ENCODE measurements at regions of chr6 and their contacts with region 1.

Region 1: DNA sequence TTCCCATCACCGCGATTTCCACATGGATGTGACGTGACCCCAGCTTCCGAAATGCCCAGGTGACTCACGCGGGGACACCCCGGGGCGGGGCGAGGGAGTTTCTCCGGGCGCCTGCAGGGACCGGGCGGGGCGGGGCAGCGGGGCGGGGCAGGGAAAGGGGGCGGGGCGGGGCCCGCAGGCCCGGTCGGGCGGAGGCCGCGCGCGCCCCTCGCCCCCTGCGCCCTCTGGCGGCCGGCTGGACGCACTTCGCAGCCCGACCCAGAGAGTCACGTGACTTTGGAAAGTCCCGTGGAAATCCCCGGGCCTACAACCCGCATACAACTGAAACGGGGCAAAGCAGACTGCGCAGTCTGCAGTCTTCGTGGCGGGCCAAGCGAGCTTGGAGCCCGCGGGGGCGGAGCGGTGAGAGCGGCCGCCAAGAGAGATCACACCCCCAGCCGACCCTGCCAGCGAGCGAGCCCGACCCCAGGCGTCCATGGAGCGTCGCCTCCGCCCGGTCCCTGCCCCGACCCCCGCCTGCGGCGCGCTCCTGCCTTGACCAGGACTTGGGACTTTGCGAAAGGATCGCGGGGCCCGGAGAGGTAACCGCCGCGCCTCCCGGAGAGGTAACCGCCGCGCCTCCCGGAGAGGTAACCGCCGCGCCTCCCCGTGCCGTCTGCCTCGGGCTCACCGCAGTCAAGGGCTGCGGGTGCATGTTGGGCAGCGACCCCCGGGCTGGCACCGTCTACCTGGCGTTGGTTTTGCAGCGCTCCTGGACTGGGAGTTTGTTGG is at the start of gene TNFAIP3:
- DNase-seq: peak; percentile 91
- H3K4me3 ChIP-seq: peak within 1 kb of the TSS; percentile 65 to 87
- H3K27ac ChIP-seq: peak within 1 kb of the TSS; percentile 79 to 85
- H3K4me1 ChIP-seq: peaks cover 4% of the 10 kb centered on the region
- H3K27me3 ChIP-seq: no peaks in the 10 kb centered on the region
- CTCF ChIP-seq: peak; percentile 82 to 96 (median 94)
- POLR2A ChIP-seq: peak; percentile 86
- total RNA-seq, gene TNFAIP3: 13.0 to 19.9 TPM

Region 2: DNA sequence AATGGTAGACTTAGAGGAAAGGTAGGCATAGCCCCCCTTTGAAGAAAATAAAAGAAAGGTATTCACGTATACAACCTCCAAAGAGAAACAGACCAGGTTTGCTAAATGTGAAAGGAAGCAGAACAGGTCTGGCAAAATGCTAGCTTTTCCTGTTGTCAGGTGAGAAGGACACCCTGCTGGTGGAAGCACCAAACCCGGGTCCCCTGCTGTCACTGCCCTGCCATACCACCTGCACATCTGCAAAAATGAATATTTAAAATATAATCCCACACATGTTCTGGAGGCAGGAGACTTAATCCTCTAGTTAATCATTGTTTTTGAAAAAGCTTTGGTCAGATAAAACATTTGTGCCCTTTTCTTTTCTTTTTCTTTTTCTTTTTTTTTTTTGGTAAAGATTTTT is 324.0 kb before region 1 on chr6:
- intact Hi-C with region 1: no loop called
- DNase-seq: no peak
- H3K4me3 ChIP-seq: no peak overlapping the region
- H3K27ac ChIP-seq: no peak overlapping the region
- H3K4me1 ChIP-seq: no peaks in the 10 kb centered on the region
- H3K27me3 ChIP-seq: no peaks in the 10 kb centered on the region
- CTCF ChIP-seq: no peak
- POLR2A ChIP-seq: no peak

Region 3: DNA sequence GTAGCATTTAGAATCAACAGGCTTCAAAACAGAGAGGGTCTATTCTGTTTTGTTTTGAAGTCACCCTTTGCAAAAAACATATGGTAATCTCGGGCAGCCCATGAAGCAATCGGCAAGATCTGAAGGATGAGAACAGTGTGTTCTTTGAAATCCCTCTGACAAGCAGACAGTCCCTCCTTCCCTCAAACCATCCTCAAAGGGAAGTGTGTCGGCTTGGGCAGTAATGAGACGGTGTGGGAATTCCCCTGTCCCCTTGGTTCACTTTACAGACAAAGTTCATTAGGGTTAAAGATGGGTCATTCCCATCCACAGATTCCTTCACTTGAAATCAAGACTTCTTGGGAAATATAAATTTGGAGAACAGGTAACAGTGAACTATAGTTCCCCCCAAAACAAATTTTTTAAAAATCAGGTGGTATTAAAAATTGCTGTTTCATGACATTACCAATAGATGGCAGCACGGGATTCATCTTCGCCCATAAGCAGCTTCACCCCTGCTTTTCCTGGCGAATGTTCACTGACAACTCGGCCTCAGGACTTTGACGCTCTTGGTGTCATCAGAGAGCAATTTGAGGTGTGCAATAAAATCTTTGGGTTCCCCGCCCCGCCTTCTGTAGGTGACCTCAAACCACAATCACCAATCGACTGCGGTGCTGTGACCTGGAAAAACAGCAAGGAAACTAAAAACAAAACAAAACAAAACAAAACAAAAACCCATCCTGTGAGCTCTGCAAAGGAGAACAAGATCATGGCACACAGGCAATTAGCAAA is 159.3 kb before region 1 on chr6:
- intact Hi-C with region 1: loop called (anchors 2 kb)
- DNase-seq: peak; percentile 61
- H3K4me3 ChIP-seq: no peak overlapping the region
- H3K27ac ChIP-seq: peak overlapping the region in 1 of 2 donors; percentile 18
- H3K4me1 ChIP-seq: no peaks in the 10 kb centered on the region
- H3K27me3 ChIP-seq: no peaks in the 10 kb centered on the region
- CTCF ChIP-seq: peak; percentile 67 to 85 (median 80)
- POLR2A ChIP-seq: no peak

Region 4: GRCh38 chr6:137799950-137800568 is 67.0 kb before region 1 on chr6:
- intact Hi-C with region 1: loop called (anchors 5 kb)
- DNase-seq: peak; percentile 57
- H3K4me3 ChIP-seq: no peak overlapping the region
- H3K27ac ChIP-seq: no peak overlapping the region
- H3K4me1 ChIP-seq: peaks cover 2% of the 10 kb centered on the region
- H3K27me3 ChIP-seq: no peaks in the 10 kb centered on the region
- CTCF ChIP-seq: peak in 3 of 4 experiments; percentile 36 to 54 (median 49)
- POLR2A ChIP-seq: no peak

Region 5: DNA sequence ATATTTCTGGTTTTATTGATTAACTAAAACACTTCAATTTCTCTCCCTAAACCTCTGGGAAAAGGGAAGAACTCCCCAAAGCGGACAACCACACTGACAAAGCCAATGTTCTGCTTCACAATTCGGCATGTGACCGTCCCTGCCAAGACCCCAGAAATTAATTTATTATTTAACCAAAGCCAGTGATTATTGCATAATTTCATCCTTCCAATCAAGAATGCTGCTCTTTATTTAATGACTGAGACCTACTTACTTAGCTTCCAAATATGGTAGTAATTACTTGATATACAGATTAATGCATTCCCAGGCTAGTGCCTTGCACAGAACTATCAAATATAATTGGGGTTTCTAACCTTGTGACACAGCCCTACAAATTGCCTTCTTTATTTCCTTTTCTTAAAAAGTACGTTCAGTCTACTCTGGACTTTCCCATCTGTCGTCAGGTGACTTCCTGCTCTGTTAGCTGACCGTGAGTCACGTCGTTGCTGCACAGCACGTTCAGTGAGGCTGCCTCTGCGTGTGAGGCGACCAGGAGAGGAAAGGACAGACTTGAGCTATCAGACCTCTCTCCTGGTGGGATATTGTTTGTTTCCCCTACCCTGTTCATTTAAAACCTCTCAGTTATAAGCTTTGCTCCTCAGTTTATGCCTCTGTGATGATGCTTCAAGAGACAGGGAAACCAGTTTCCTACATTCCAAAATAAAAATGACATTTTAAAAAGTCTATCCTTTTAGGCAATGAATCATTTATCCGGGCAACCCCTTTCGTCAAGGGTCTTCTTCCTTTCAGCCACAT is 55.8 kb before region 1 on chr6:
- intact Hi-C with region 1: no loop called
- DNase-seq: peak; percentile 49
- H3K4me3 ChIP-seq: no peak overlapping the region
- H3K27ac ChIP-seq: no peak overlapping the region
- H3K4me1 ChIP-seq: no peaks in the 10 kb centered on the region
- H3K27me3 ChIP-seq: no peaks in the 10 kb centered on the region
- CTCF ChIP-seq: no peak
- POLR2A ChIP-seq: no peak

Region 6: GRCh38 chr6:137944793-137945498 is 77.8 kb after region 1 on chr6:
- intact Hi-C with region 1: loop called (anchors 5 kb)
- DNase-seq: no peak
- H3K4me3 ChIP-seq: no peak overlapping the region
- H3K27ac ChIP-seq: no peak overlapping the region
- H3K4me1 ChIP-seq: no peaks in the 10 kb centered on the region
- H3K27me3 ChIP-seq: no peaks in the 10 kb centered on the region
- CTCF ChIP-seq: peak; percentile 31 to 78 (median 69)
- POLR2A ChIP-seq: no peak

Region 7: GRCh38 chr6:138031850-138032249 is 164.8 kb after region 1 on chr6:
- intact Hi-C with region 1: no loop called
- DNase-seq: no peak
- H3K4me3 ChIP-seq: no peak overlapping the region
- H3K27ac ChIP-seq: peak overlapping the region in 1 of 2 donors; percentile 19
- H3K4me1 ChIP-seq: no peaks in the 10 kb centered on the region
- H3K27me3 ChIP-seq: no peaks in the 10 kb centered on the region
- CTCF ChIP-seq: no peak
- POLR2A ChIP-seq: no peak

Region 8: GRCh38 chr6:138109042-138109997 is 242.2 kb after region 1 on chr6:
- intact Hi-C with region 1: loop called (anchors 10 kb)
- DNase-seq: peak; percentile 73
- H3K4me3 ChIP-seq: no peak overlapping the region
- H3K27ac ChIP-seq: peak overlapping the region; percentile 34 to 99
- H3K4me1 ChIP-seq: no peaks in the 10 kb centered on the region
- H3K27me3 ChIP-seq: no peaks in the 10 kb centered on the region
- CTCF ChIP-seq: peak; percentile 95 to 98 (median 97)
- POLR2A ChIP-seq: no peak

Measured in prostate gland (tissue), 2 donors.